Dendritic cell treated with granulocyte-macrophage colony-stimulating factor and Interleukin-4, amounts not matched to agents 40 ng/mL and 50 ng/mL, for 4 days (primary cell): ENCODE measurements at regions of chr1 and their contacts with region 1.

Region 1: DNA sequence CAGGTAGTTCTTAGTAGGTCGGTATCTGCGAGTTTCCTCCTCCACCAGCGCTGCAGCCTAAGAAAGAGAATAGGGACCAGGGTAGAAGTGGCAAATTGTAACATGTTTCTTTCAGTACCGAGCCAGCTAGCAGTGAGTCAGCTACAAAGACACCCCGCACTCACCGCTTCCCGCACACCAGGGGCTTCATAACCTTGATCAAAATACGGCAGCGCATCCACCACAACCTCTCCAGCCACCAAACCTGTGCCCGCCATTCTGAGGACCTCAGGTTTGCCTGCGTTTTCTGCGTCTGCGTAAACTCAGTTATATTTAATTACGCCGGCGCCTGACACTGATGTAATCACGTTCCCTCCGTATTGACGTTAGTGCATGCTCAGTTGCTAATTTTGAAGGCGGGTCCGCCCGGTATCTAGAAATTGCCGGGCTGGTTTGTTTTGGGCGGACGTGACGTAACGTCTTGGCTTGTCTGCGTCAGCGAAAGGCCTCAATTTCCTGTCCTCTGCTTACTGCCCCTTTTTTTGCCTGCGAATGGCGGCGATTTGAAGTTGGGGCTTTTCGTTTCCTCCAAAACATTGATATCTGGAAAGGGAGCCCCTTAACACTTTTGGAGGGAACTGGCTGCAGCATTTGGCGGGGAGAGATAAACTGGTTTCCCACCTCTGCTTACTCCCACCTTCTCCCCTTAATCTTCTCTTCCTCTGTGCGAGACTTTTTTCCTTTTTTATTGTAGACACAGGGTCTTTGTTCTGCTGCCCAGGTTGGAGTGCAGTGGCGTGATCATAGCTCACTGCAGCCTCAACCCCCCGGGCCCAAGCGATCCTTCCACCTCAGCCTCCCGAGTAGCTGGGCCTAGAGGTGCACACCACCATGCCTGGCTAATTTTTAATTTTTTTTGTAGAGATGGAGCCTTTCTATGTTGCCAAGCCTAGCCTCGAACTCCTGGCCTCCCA is at the start of gene BCAS2:
- H3K4me3 Mint-ChIP-seq: peak within 1 kb of the TSS; percentile 85
- H3K27ac Mint-ChIP-seq: peak within 1 kb of the TSS; percentile 98
- H3K4me1 Mint-ChIP-seq: peaks cover 9% of the 10 kb centered on the region
- H3K27me3 Mint-ChIP-seq: peaks cover 22% of the 10 kb centered on the region

Region 2: GRCh38 chr1:114015075-114015685 is 566.4 kb before region 1 on chr1:
- intact Hi-C with region 1: no loop called
- H3K4me3 Mint-ChIP-seq: no peak overlapping the region
- H3K27ac Mint-ChIP-seq: no peak overlapping the region
- H3K4me1 Mint-ChIP-seq: peaks cover 6% of the 10 kb centered on the region
- H3K27me3 Mint-ChIP-seq: peaks cover 1% of the 10 kb centered on the region

Region 3: DNA sequence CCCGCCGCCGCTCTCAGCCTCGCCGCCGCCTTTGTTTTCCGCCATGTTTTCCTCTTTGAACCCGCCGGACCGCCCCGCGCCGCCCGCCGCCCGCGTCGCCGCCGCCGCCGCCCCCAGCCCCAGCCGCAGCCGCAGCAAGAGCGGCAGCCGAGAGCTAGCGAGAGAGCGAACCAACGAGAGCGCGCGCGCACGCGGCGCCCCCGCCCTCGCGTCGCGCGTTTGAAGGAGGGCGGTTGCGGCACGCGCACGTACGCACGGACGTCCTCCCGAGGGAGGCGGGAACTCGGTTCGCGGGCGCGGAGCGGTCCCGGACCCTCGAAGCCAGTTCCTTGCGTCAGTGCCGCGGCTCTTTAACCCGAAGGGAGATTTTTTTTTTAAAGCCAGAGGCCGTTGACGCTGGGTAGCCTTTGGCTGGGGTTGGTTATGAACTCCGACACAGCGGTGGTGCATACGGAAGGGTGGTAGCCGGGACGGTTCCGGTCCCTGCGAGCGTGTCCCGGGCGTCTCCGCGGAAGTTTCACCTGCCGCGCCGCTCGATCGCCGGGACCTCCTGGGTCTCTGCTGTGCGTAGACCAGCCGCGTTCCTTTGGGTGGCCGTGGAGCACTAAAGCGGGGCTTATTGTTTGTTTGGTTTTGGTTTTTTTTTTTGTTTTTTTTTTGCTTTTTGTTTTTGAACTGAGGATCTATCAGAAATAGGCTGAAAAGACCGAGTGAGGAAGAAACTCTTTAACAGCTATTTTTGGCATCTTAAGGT is 70.4 kb before region 1 on chr1 and contains the start of gene TRIM33:
- intact Hi-C with region 1: loop called (anchors 2 kb)
- H3K4me3 Mint-ChIP-seq: peak within 1 kb of the TSS; percentile 89
- H3K27ac Mint-ChIP-seq: peak within 1 kb of the TSS; percentile 100
- H3K4me1 Mint-ChIP-seq: peaks cover 46% of the 10 kb centered on the region
- H3K27me3 Mint-ChIP-seq: peaks cover 2% of the 10 kb centered on the region

Region 4: DNA sequence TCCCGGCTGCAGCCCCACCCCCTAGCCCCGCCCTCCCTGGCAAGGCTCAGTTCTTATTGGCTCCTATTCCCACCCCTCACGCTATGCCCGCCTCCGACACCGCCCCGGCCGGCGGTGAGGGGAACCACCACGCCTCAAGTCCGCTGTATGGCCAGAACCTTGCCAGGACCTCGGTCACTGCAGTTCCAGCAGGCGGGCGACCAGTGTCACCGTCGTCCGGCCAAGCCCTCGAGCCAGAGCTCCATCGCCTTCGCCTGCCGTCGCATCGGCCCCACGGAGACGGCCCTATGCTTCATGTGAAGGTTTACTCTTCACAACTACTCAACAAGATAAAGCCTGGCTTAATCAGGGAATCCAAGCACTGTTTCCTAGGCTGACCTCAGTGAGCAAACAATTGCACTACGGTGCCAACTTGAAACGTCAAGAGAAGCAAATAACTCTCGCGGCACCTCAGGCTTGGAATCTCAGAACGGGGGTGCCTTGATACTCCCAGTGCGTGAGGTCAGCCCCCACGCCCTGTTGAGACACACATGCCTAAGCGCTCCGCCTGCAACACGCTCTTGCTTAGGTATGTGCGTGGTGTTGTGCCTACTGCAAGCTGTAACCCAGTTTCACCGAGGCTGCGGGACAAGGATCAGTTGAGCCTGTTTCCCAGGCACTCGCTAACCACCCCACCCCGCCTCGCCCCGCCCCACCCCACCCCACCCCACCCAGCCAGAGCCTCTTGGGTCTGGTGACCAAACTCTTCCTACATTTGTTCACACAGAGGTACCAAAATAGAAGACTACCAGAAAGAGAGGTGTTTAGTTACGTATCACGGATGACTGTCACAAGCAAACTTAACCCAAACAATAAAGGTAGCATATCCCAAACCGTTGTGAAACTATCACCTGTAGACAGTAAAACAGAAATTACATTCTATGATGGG is 88.7 kb after region 1 on chr1:
- intact Hi-C with region 1: loop called (anchors 5 kb)
- H3K4me3 Mint-ChIP-seq: peak overlapping the region; percentile 81
- H3K27ac Mint-ChIP-seq: peak overlapping the region; percentile 45
- H3K4me1 Mint-ChIP-seq: no peaks in the 10 kb centered on the region
- H3K27me3 Mint-ChIP-seq: peaks cover 36% of the 10 kb centered on the region

Region 5: DNA sequence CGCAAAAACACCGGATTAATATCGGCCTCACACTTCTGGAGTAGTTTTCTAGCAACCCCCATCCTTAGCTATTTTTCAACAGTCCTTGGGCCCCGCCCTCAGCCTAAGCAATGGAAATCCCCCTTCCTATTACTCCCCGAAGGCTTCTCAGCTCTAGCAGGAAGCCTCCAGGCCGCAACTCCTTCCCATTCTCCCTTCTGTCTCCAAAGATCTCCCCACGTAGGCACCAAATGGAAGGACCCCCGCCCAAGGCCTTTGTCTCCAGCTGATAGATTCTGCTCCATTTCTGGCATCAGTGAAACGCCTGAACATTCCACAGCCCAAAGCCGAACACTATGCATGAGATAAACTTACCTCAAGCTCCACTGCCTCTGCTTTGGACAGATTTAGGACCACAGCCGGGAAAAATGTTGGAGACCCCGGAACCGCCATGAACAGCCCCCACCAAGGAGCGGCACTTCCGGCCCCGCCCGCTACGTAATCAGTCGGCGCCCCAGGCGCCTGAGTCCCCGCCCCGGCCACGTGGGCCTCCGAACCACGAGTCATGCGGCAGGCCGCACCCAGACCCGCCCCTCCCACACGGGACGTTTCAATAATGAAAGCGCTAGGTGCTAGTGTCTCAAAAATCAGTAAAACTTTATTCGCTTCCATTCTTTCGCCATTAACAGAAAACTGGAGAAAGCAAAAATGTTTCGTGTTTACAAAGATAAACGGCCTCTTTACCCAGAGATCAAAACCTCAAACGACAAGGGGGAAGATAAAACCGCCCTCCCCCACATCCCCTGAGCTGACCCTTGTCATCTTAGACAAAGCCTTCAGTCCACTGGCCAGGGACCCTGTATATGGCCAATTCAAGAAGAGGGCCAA is 134.9 kb after region 1 on chr1 and contains the start of gene NRAS:
- intact Hi-C with region 1: loop called (anchors 1 kb)
- H3K4me3 Mint-ChIP-seq: peak within 1 kb of the TSS; percentile 98
- H3K27ac Mint-ChIP-seq: peak within 1 kb of the TSS; percentile 100
- H3K4me1 Mint-ChIP-seq: no peaks in the 10 kb centered on the region
- H3K27me3 Mint-ChIP-seq: no peaks in the 10 kb centered on the region

Region 6: DNA sequence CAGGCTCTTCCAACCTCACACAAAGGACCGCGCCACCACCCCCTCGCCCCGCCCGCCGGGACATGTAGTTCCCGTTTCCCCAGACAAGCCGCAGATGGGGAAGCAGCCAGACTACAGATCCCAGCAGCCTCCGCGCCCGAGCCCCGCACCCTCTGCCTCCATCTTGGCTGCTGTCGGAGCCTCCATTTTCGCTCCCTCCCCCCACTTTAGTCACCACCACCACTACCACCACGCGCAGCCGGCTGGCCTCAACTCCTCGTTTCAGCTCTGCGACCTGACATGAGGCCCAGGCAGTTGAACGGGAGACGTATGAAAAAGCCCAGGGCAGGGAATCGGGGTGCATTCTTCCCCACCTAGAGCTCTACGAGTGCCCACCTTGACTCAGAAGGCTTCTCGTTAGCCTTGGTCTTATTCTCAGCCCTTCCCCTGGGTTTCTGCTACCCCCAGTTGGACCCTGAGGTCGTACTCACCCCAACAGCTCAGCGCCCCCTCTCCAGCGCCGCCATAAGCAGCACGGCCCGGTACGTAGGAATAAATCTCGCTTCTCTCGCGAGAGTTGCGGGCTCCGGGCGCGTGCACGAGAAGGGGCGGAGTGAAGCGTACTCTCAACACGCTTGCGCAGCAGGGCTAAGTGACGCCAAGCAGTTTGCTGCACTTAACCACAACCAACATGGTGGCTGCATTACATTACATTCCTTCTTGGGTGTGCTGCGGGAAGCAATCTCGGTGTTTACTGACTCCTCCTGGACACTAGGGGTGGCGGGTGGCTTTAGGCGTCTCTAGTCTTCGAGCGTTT is 176.0 kb after region 1 on chr1 and contains the start of gene CSDE1:
- intact Hi-C with region 1: loop called (anchors 5 kb)
- H3K4me3 Mint-ChIP-seq: peak within 1 kb of the TSS; percentile 97
- H3K27ac Mint-ChIP-seq: peak within 1 kb of the TSS; percentile 100
- H3K4me1 Mint-ChIP-seq: peaks cover 41% of the 10 kb centered on the region
- H3K27me3 Mint-ChIP-seq: no peaks in the 10 kb centered on the region

Region 7: DNA sequence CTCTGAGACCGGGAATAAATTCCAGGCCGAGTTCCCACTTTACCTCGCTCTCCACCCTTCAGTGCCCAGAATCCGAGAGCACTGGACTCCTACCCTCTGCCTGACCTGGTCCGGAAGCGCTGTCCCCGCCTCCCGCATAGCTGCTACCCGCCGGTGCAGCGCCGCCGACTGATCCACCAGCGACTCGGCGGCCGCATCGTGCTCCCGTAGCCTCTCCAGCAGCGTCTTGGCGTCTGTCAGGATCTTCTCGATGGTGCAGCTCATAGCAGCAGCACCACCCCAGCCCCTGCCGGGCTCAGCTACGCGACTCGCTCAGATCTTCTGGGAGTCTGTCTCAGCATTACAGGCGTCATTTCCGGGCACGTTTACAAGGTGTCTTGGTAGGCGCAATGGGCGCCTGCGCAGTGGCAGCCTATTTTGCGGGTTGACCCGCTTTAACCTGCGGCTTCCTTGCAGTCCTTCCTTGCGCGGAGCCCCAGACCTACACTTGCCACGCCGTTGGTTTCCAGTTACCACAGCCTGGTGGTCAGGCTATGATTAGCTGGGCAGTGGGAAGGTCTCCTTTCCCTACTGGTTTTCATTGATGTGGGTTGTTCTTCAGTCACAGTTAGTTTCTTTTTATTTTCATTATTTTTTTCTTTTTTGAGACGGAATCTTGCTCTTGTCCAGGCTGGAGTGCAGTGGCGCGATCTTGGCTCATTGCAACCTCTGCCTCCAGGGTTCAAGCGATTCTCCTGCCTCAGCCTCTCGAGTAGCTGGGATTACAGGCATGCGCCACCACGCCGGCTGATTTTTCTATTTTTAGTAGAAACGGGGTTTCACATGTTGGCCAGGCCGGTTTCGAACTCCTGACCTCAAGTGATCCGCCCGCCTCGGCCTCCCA is 199.0 kb after region 1 on chr1 and contains the start of gene SIKE1:
- intact Hi-C with region 1: loop called (anchors 5 kb)
- H3K4me3 Mint-ChIP-seq: peak within 1 kb of the TSS; percentile 94
- H3K27ac Mint-ChIP-seq: peak within 1 kb of the TSS; percentile 96
- H3K4me1 Mint-ChIP-seq: peaks cover 6% of the 10 kb centered on the region
- H3K27me3 Mint-ChIP-seq: peaks cover 22% of the 10 kb centered on the region